Adrenal gland (tissue), 19 donors: ENCODE measurements at regions of chr17 and their contacts with region 1.

Region 1: GRCh38 chr17:27879987-27880608 is 13.1 kb downstream of the LYRM9 start:
- DNase-seq: peak; percentile 72 to 88 (median 82)
- H3K4me3 ChIP-seq: no peak overlapping the region
- H3K27ac ChIP-seq: no peak overlapping the region
- H3K4me1 ChIP-seq: no peaks in the 10 kb centered on the region
- H3K27me3 ChIP-seq: no peaks in the 10 kb centered on the region
- CTCF ChIP-seq: peak; percentile 59 to 93 (median 86)
- POLR2A ChIP-seq: no peak

Region 2: GRCh38 chr17:27578718-27579085 is 301.4 kb before region 1 on chr17:
- intact Hi-C with region 1: no loop called
- DNase-seq: peak in 1 of 7 donors; percentile 39
- H3K4me3 ChIP-seq: no peak overlapping the region
- H3K27ac ChIP-seq: peak overlapping the region; percentile 84 to 97 (median 86)
- H3K4me1 ChIP-seq: peaks cover 28 to 52% of the 10 kb centered on the region in 2 donors
- H3K27me3 ChIP-seq: no peaks in the 10 kb centered on the region
- CTCF ChIP-seq: no peak
- POLR2A ChIP-seq: no peak

Region 3: GRCh38 chr17:27612160-27612770 is 267.8 kb before region 1 on chr17:
- intact Hi-C with region 1: no loop called
- DNase-seq: peak in 1 of 7 donors; percentile 30
- H3K4me3 ChIP-seq: no peak overlapping the region
- H3K27ac ChIP-seq: peak overlapping the region in 3 of 5 donors; percentile 17 to 74 (median 58)
- H3K4me1 ChIP-seq: peaks cover 15 to 34% of the 10 kb centered on the region in 2 donors
- H3K27me3 ChIP-seq: no peaks in the 10 kb centered on the region
- CTCF ChIP-seq: no peak
- POLR2A ChIP-seq: no peak

Region 4: GRCh38 chr17:27805520-27806146 is 74.5 kb before region 1 on chr17:
- intact Hi-C with region 1: loop called (anchors 5 kb)
- DNase-seq: peak; percentile 85 to 96 (median 88)
- H3K4me3 ChIP-seq: peak overlapping the region in 1 of 4 donors; percentile 51
- H3K27ac ChIP-seq: peak overlapping the region in 1 of 5 donors; percentile 81
- H3K4me1 ChIP-seq: no peaks in the 10 kb centered on the region
- H3K27me3 ChIP-seq: no peaks in the 10 kb centered on the region
- CTCF ChIP-seq: peak; percentile 61 to 93 (median 88)
- POLR2A ChIP-seq: no peak